HEK293 (cell line): ENCODE measurements at regions of chr4 and their contacts with region 1.

Region 1: DNA sequence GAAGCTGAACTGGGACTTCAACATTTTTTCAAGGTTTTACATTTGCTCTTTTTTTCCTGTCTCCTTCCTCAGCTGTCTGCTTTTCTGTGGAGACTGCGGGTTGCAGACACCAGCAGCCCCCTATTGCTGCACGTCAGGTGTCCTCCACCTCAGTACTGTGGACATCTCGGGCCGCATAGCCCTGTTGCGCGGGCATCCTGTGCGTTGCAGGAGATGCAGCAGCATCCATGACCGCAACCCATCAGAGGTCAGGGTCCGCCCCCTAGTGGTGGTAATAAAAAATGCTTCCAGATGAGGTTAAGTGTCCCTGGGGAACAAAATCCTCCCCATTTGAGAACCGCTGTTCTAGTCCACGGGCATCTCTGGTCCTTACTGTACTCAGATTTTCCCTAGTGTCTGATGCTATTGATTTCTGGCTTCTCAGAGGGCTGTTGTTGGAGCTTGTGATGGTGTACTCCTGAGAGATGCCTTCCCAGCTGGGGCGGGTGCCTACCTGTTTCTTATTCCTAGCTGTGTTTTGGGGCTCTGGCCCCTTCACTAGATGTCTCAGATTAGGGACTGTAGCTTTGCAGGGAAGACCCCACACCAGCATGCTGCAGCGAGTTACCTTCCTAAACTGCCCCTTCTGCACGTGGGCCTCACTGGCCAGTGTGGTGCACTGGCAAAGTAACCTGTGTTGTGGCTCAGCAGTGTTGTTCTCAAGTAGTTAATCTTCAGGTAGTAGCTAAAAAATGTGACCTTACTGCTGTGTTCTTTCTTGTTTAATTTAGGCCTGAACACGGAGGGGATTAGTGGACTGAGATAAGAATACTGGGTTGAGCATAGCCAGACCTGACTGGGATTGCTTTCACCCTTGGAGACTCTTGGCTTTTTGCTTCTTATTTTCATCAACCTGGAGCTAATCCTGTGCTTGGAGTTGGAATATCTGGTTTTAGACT is 28.2 kb downstream of the NSD2 start:
- H3K4me3 ChIP-seq: no peak overlapping the region
- H3K27ac ChIP-seq: no peak overlapping the region
- H3K4me1 ChIP-seq: 0 out of 2 replicates have a peak, but pooled peaks cover 3% of the 10 kb centered on the region
- CTCF ChIP-seq: peak; percentile 64

Region 2: DNA sequence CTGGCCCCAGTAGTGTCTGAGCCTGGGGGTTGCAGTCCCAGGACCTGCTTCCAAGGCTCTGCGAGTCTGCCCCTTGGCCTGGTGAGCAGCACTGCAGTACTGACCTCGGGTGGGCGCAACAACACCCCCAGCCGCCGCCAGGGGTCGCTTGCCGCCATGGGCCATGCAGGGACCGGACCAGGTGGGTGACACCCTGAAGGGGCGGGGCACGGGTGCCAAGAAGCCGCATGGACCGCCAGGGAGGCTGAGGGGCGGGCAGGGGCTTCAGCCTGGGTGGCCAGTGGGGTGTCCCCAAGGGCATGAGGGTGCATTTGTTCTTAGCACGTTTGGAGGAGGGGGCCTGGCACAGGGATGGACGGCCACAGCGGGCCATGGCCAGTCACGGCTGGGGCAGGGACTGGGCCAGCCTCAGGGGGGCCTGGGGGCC is 153.1 kb before region 1 on chr4:
- CTCF ChIA-PET with region 1: interaction called, 22 read pairs
- POLR2A ChIA-PET with region 1: no interaction called
- H3K4me3 ChIP-seq: no peak overlapping the region
- H3K27ac ChIP-seq: no peak overlapping the region
- H3K4me1 ChIP-seq: no peaks in the 10 kb centered on the region
- CTCF ChIP-seq: peak; percentile 93

Region 3: GRCh38 chr4:1859389-1859753 is 40.0 kb before region 1 on chr4:
- CTCF ChIA-PET with region 1: interaction called, 14 read pairs
- POLR2A ChIA-PET with region 1: no interaction called
- H3K4me3 ChIP-seq: no peak overlapping the region
- H3K27ac ChIP-seq: no peak overlapping the region
- H3K4me1 ChIP-seq: no peaks in the 10 kb centered on the region
- CTCF ChIP-seq: 0 out of 2 replicates have a peak, but pooled peaks have one; percentile 28

Region 4: DNA sequence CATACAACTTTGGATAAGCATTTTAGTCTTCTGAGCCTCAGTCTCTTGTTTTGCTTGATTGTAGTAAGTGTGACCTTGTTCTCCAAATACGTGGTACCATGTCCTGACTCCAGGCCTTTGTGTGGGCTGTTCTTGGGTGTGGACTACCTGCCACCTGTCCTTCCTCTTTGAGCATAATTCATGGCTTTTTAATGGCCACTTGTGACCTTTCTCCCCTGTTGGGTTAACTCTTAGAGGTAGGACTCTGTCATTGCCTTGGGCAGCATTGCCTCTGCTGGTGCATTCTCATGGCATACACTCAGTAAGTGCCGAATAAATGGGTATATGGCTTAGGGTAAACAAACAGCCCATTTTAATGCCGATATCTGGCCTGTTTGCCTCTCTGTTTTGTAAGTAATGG is 25.2 kb before region 1 on chr4:
- CTCF ChIA-PET with region 1: interaction called, 11 read pairs
- POLR2A ChIA-PET with region 1: interaction called, 3 read pairs
- H3K4me3 ChIP-seq: no peak overlapping the region
- H3K27ac ChIP-seq: no peak overlapping the region
- H3K4me1 ChIP-seq: no peaks in the 10 kb centered on the region
- CTCF ChIP-seq: no peak

Region 5: DNA sequence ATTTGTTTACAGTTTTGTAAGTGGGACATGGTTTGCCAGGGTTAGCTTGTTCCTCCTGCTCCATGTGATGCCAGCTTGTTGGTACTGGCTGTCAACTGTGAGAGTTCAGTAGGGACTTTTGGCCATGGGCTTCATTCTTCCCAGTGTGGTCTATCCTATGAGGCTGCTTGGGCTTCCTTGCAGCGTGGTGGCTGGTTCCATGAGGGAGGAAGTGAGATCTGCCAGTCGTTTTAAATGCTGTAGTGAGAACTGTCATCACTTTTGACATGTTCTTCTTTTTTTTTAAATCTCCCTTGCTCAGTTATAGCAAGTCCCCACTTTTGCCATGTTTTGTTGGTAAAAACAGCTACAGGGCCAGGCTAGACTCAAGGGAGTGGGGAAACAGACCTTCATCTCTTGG is 12.4 kb before region 1 on chr4:
- CTCF ChIA-PET with region 1: interaction called, 24 read pairs
- POLR2A ChIA-PET with region 1: interaction called, 5 read pairs
- H3K4me3 ChIP-seq: no peak overlapping the region
- H3K27ac ChIP-seq: peak overlapping the region; percentile 8; the same call in 1 of the 2 replicates
- H3K4me1 ChIP-seq: no peaks in the 10 kb centered on the region
- CTCF ChIP-seq: no peak

Region 6: DNA sequence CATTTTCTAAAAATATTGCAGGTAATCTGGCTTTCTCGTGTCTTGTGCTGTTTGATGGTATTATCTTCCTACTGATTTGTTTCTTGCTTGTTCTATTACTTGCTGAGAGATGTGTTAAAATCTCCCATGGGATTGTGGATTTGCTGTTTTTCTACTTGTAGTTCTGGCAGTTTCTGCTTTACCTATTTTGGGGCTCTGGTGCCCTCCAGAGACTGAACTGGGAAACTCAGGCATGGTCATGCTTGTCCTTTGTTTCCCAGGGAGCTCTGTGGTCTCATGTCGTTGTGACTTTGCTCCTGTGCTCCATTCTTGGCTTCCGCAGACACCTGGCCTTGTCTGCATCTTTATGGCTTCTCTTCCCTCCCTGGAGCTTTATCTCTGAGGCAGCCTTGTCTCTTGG is 11.2 kb after region 1 on chr4:
- CTCF ChIA-PET with region 1: interaction called, 33 read pairs
- POLR2A ChIA-PET with region 1: interaction called, 5 read pairs
- H3K4me3 ChIP-seq: no peak overlapping the region
- H3K27ac ChIP-seq: no peak overlapping the region
- H3K4me1 ChIP-seq: no peaks in the 10 kb centered on the region
- CTCF ChIP-seq: no peak